ENCODE measurements at regions of chr20 and their contacts with region 1.

Region 1: GRCh38 chr20:1857466-1857865 is 37.7 kb upstream of the SIRPA start:
- DNase-seq: no peak
- H3K4me3 ChIP-seq: no peak overlapping the region
- H3K27ac ChIP-seq: peak overlapping the region; percentile 69
- H3K4me1 ChIP-seq: peaks cover 78% of the 10 kb centered on the region
- H3K27me3 ChIP-seq: no peaks in the 10 kb centered on the region
- CTCF ChIP-seq: no peak

Region 2: DNA sequence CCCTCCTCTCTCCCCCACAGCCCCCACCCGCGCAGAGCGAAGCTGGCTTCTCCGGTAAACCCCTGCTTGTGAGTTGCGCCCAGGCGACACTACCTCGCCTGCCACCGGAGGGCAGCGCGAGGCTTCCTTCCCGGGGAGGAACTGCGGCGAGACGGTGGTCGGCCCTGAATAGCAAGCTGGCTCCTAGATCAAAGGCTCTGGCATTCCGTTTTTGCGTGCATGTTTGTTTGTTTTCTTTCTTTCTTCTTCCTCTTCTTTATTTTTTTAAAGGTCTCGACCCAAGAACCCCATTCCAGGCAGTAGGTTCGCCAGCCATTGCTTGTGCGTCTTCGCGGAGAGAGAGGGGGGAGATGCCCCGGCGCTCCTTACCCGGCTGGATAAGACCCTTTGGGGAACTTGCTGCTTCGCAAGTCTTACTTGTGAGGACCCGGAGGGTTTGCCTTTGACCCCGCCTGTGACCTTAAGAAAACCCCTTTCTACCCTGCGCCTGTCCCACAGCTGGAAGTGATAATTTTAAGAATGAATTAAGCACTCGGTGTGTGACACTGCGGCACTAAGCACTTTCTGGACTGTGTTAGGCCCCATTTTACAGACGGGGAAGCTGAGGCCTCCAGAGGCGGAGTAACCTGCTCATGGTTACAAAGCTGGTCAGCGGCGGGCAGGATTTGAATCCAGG is 54.9 kb before region 1 on chr20:
- CTCF ChIA-PET with region 1: no interaction called
- POLR2A ChIA-PET with region 1: no interaction called
- intact Hi-C with region 1: loop called (anchors 5 kb)
- DNase-seq: peak; percentile 90
- H3K4me3 ChIP-seq: peak overlapping the region; percentile 62
- H3K27ac ChIP-seq: peak overlapping the region; percentile 85
- H3K4me1 ChIP-seq: peaks cover 45% of the 10 kb centered on the region
- H3K27me3 ChIP-seq: no peaks in the 10 kb centered on the region
- CTCF ChIP-seq: peak; percentile 87